CD4-positive, alpha-beta memory T cell (primary cell): ENCODE measurements at regions of chr11 and their contacts with region 1.

Region 1: DNA sequence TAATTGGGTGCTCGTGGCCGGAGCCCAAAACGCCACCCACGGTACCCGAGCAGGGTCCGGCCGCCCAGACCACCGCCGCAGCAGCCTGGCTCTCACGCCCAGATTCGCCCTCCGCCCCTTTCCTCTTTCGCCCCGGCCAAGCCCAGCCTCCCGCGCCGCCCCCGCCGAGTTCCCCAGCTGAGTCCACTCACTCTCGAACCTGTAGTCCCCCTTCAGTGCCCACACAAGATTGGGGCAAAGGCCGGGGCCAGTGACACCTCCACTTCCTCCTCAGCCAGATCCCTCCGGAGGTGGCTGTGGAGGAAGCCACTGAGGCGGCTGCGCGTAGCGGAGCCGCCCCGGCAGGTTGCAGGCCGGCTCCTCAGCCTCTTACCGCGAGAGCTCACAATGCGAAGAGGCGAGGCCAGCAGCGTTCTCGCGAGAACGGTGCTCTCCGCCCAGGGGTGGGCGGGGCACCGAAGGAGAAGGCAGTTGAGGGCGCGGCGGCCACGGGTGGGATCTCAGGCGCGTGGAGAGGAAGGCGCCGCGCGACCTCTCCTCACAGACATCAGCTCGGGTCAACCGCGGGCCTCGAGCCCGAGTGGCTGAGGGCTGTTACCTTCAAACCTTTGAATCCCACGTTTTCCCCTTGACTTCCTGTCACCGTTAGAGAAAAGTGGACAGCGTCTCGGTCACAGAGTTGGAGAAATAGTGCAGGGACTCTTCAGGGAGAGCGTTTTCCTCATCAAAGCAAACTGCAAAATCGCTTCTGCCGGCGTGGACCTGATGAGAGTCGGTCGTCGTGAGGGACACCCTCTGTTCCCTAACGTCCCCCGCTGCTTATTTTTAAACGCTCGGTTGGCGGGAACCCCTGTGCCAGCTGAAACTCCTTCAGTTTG is at the start of gene BTBD10:
- DNase-seq: peak; percentile 91 to 95 (median 92)
- H3K4me3 ChIP-seq: peak within 1 kb of the TSS; percentile 90 to 95
- H3K4me3 Mint-ChIP-seq: peak within 1 kb of the TSS; percentile 97 to 99 (median 98)
- H3K27ac ChIP-seq: peak within 1 kb of the TSS; percentile 92
- H3K27ac Mint-ChIP-seq: peak within 1 kb of the TSS; percentile 96 to 99 (median 97)
- H3K4me1 ChIP-seq: peaks cover 34% of the 10 kb centered on the region
- H3K4me1 Mint-ChIP-seq: peaks cover 30 to 56% (median 44%) of the 10 kb centered on the region in 4 donors
- H3K27me3 ChIP-seq: no peaks in the 10 kb centered on the region
- H3K27me3 Mint-ChIP-seq: no peaks in the 10 kb centered on the region
- total RNA-seq, gene BTBD10: 22.4 to 22.6 TPM

Region 2: GRCh38 chr11:11841723-11842420 is 1621.3 kb before region 1 on chr11 and contains the start of gene USP47:
- CTCF ChIA-PET with region 1: no interaction called
- POLR2A ChIA-PET with region 1: no interaction called
- intact Hi-C with region 1: loop called (anchors 10 kb)
- DNase-seq: peak; percentile 91 to 96 (median 95)
- H3K4me3 ChIP-seq: peak within 1 kb of the TSS; percentile 27 to 85
- H3K4me3 Mint-ChIP-seq: peak within 1 kb of the TSS in 1 of 8 donors; percentile 86
- H3K27ac ChIP-seq: peak within 1 kb of the TSS; percentile 98
- H3K27ac Mint-ChIP-seq: peak within 1 kb of the TSS in 4 of 7 donors; percentile 88 to 90 (median 90)
- H3K4me1 ChIP-seq: peaks cover 39% of the 10 kb centered on the region
- H3K4me1 Mint-ChIP-seq: peaks cover 0 to 24% (median 2%) of the 10 kb centered on the region in 4 donors
- H3K27me3 ChIP-seq: no peaks in the 10 kb centered on the region
- H3K27me3 Mint-ChIP-seq: peaks cover 8 to 11% of the 10 kb centered on the region in 2 donors
- total RNA-seq, gene USP47: 62.2 to 65.9 TPM

Region 3: DNA sequence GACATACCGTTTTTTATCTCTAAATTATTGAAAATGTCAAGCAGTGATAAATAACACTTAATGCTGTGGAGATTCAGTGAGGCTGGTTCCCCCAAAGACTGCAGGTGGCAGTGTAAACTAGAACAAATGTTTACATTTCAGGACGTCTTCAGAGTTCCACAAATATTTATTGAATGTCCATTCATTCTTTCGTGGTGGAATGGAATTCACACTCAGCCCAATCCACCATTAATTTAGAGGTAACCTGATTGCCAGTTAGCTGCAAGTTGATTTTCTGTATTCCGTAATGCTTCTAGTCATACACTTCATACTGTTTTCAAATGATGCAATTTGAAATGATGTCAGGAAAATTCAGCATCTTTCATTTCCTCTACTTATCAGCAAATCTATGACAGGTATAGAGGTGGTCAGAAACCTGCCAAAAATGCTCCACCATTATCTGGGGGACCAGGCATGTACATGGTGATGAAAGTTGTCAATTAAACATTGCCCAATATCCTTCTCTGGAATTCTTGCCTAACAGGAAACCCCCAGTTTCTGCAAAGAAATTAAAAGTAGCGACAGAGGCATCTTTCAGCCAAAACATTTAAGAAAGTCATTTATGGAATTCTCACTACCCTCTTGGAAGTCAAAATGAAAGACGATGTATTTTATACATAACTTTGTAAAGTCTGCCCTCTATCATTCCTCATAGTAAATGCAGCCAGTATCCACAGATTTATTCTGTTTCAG is 279.9 kb before region 1 on chr11:
- CTCF ChIA-PET with region 1: interaction called, 3 read pairs
- POLR2A ChIA-PET with region 1: interaction called, 3 read pairs
- intact Hi-C with region 1: loop called (anchors 2 kb)
- DNase-seq: peak in 4 of 5 donors; percentile 12 to 32 (median 24)
- H3K4me3 ChIP-seq: no peak overlapping the region
- H3K4me3 Mint-ChIP-seq: peak overlapping the region in 7 of 8 donors; percentile 44 to 65 (median 60)
- H3K27ac ChIP-seq: no peak overlapping the region
- H3K27ac Mint-ChIP-seq: no peak overlapping the region
- H3K4me1 ChIP-seq: peaks cover 7% of the 10 kb centered on the region
- H3K4me1 Mint-ChIP-seq: peaks cover 3 to 6% (median 6%) of the 10 kb centered on the region in 4 donors
- H3K27me3 ChIP-seq: no peaks in the 10 kb centered on the region
- H3K27me3 Mint-ChIP-seq: peaks cover 8 to 12% of the 10 kb centered on the region in 2 donors

Region 4: DNA sequence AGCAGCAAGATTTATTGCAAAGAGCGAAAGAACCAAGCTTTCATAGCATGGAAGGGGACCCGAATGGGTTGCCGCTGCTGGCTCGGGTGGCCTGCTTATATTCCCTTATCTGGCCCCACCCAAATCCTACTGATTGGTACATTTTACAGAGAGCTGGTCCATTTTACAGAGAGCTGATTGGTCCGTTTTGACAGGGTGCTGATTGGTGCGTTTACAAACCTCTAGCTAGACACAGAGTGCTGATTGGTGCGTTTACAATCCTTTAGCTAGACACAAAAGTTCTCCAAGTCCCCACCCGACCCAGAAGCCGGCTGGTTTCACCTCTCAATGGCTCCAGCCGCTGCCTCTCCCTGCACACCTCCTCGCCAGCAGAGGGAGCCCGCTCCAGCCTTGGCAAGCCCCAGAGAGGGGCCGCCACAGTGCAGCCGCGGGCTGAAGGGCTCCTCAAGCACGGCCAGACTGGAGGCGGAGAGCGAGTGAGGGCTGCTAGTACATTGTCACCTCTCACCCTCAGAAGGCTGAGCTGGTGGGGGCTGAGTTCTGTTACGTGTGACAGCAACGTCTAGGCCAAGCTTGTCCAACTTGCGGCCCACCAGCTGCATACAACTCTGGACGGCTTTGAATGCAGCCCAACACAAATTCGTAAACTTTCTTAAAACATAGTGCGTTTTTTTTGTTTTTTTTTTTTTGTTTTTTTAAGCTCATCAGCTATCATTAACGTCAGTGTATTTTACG is 24.0 kb after region 1 on chr11:
- CTCF ChIA-PET with region 1: interaction called, 38 read pairs
- POLR2A ChIA-PET with region 1: interaction called, 7 read pairs
- intact Hi-C with region 1: loop called (anchors 1 kb)
- DNase-seq: peak; percentile 54 to 72 (median 60)
- H3K4me3 ChIP-seq: peak overlapping the region in 1 of 2 donors; percentile 23
- H3K4me3 Mint-ChIP-seq: peak overlapping the region; percentile 73 to 90 (median 83)
- H3K27ac ChIP-seq: peak overlapping the region; percentile 21
- H3K27ac Mint-ChIP-seq: peak overlapping the region in 4 of 7 donors; percentile 3 to 92 (median 48)
- H3K4me1 ChIP-seq: no peaks in the 10 kb centered on the region
- H3K4me1 Mint-ChIP-seq: peaks cover 6 to 11% (median 6%) of the 10 kb centered on the region in 4 donors
- H3K27me3 ChIP-seq: no peaks in the 10 kb centered on the region
- H3K27me3 Mint-ChIP-seq: peaks cover 5 to 11% of the 10 kb centered on the region in 2 donors

Region 5: GRCh38 chr11:14358729-14359439 is 895.7 kb after region 1 on chr11 and contains the start of gene RRAS2:
- CTCF ChIA-PET with region 1: no interaction called
- POLR2A ChIA-PET with region 1: no interaction called
- intact Hi-C with region 1: loop called (anchors 10 kb)
- DNase-seq: peak; percentile 70 to 79 (median 78)
- H3K4me3 ChIP-seq: peak within 1 kb of the TSS; percentile 52 to 66
- H3K4me3 Mint-ChIP-seq: peak within 1 kb of the TSS; percentile 91 to 99 (median 97)
- H3K27ac ChIP-seq: peak within 1 kb of the TSS; percentile 44
- H3K27ac Mint-ChIP-seq: peak within 1 kb of the TSS; percentile 79 to 98 (median 91)
- H3K4me1 ChIP-seq: peaks cover 16% of the 10 kb centered on the region
- H3K4me1 Mint-ChIP-seq: peaks cover 24 to 37% (median 30%) of the 10 kb centered on the region in 4 donors
- H3K27me3 ChIP-seq: no peaks in the 10 kb centered on the region
- H3K27me3 Mint-ChIP-seq: no peaks in the 10 kb centered on the region
- total RNA-seq, gene RRAS2: 11.4 to 11.8 TPM